ENCODE measurements at regions of chr1 and their contacts with region 1.

Region 1: GRCh38 chr1:36385410-36386257 is at the start of gene STK40:
- DNase-seq: peak; percentile 99
- H3K4me3 Mint-ChIP-seq: peak within 1 kb of the TSS; percentile 93
- H3K27ac Mint-ChIP-seq: peak within 1 kb of the TSS; percentile 100
- H3K4me1 Mint-ChIP-seq: peaks cover 56% of the 10 kb centered on the region
- H3K27me3 Mint-ChIP-seq: no peaks in the 10 kb centered on the region
- total RNA-seq, gene STK40: 57.3 to 57.4 TPM

Region 2: GRCh38 chr1:36051821-36052220 is 333.8 kb before region 1 on chr1:
- CTCF ChIA-PET with region 1: no interaction called
- POLR2A ChIA-PET with region 1: no interaction called
- intact Hi-C with region 1: no loop called
- DNase-seq: no peak
- H3K4me3 Mint-ChIP-seq: no peak overlapping the region
- H3K27ac Mint-ChIP-seq: no peak overlapping the region
- H3K4me1 Mint-ChIP-seq: no peaks in the 10 kb centered on the region
- H3K27me3 Mint-ChIP-seq: no peaks in the 10 kb centered on the region

Region 3: DNA sequence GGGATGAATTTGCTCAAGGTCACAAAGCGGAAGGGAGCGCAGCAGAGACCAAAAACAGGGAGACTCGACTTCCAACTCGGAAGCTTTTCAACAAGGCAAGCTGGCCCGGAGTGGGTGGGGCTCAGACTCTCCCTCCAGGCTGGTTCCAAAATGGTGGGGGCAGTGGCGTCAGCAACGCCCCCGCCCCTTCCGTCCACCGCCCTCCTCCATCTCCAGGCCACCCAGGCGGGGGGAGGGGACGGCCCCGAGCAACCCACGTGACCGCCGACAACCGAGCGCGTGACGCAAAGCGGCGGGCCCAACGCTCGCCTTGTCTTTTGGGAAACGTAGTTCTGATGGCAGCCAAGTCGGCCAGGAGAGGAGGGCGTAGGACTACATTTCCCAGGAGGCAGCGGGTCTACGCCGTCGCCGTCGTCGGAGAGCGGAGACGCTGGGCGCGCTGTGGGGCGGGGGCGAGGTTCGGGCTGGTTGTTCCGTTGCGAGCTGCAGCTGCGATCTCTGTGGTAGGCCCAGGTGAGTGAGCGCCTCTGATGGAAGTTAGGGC is 161.6 kb before region 1 on chr1 and contains the start of gene THRAP3:
- CTCF ChIA-PET with region 1: no interaction called
- POLR2A ChIA-PET with region 1: no interaction called
- intact Hi-C with region 1: loop called (anchors 1 kb)
- DNase-seq: peak; percentile 100
- H3K4me3 Mint-ChIP-seq: peak within 1 kb of the TSS; percentile 99
- H3K27ac Mint-ChIP-seq: peak within 1 kb of the TSS; percentile 100
- H3K4me1 Mint-ChIP-seq: peaks cover 30% of the 10 kb centered on the region
- H3K27me3 Mint-ChIP-seq: no peaks in the 10 kb centered on the region
- total RNA-seq, gene THRAP3: 135 to 138 TPM

Region 4: GRCh38 chr1:36306902-36307456 is 78.7 kb before region 1 on chr1:
- CTCF ChIA-PET with region 1: no interaction called
- POLR2A ChIA-PET with region 1: interaction called, 11 read pairs
- intact Hi-C with region 1: loop called (anchors 1 kb)
- DNase-seq: peak; percentile 95
- H3K4me3 Mint-ChIP-seq: peak overlapping the region; percentile 95
- H3K27ac Mint-ChIP-seq: peak overlapping the region; percentile 79
- H3K4me1 Mint-ChIP-seq: peaks cover 43% of the 10 kb centered on the region
- H3K27me3 Mint-ChIP-seq: no peaks in the 10 kb centered on the region

Region 5: GRCh38 chr1:36369061-36369861 is 16.4 kb before region 1 on chr1:
- CTCF ChIA-PET with region 1: interaction called, 66 read pairs
- POLR2A ChIA-PET with region 1: interaction called, 11 read pairs
- intact Hi-C with region 1: no loop called
- DNase-seq: peak; percentile 90
- H3K4me3 Mint-ChIP-seq: no peak overlapping the region
- H3K27ac Mint-ChIP-seq: peak overlapping the region; percentile 62
- H3K4me1 Mint-ChIP-seq: peaks cover 67% of the 10 kb centered on the region
- H3K27me3 Mint-ChIP-seq: no peaks in the 10 kb centered on the region

Region 6: GRCh38 chr1:36411674-36412520 is 26.3 kb after region 1 on chr1:
- CTCF ChIA-PET with region 1: no interaction called
- POLR2A ChIA-PET with region 1: interaction called, 4 read pairs
- intact Hi-C with region 1: loop called (anchors 1 kb)
- DNase-seq: peak; percentile 81
- H3K4me3 Mint-ChIP-seq: peak overlapping the region; percentile 38
- H3K27ac Mint-ChIP-seq: peak overlapping the region; percentile 65
- H3K4me1 Mint-ChIP-seq: peaks cover 16% of the 10 kb centered on the region
- H3K27me3 Mint-ChIP-seq: no peaks in the 10 kb centered on the region

Region 7: GRCh38 chr1:36458654-36459309 is 73.1 kb after region 1 on chr1:
- CTCF ChIA-PET with region 1: no interaction called
- POLR2A ChIA-PET with region 1: interaction called, 4 read pairs
- intact Hi-C with region 1: loop called (anchors 2 kb)
- DNase-seq: peak; percentile 85
- H3K4me3 Mint-ChIP-seq: no peak overlapping the region
- H3K27ac Mint-ChIP-seq: peak overlapping the region; percentile 77
- H3K4me1 Mint-ChIP-seq: peaks cover 44% of the 10 kb centered on the region
- H3K27me3 Mint-ChIP-seq: no peaks in the 10 kb centered on the region

Region 8: GRCh38 chr1:36486436-36487335 is 101.1 kb after region 1 on chr1:
- CTCF ChIA-PET with region 1: no interaction called
- POLR2A ChIA-PET with region 1: no interaction called
- intact Hi-C with region 1: no loop called
- DNase-seq: no peak
- H3K4me3 Mint-ChIP-seq: no peak overlapping the region
- H3K27ac Mint-ChIP-seq: no peak overlapping the region
- H3K4me1 Mint-ChIP-seq: peaks cover 10% of the 10 kb centered on the region
- H3K27me3 Mint-ChIP-seq: no peaks in the 10 kb centered on the region

Measured in activated CD4-positive, alpha-beta memory T cell treated with anti-CD3 and anti-CD28 coated beads for 36 hours (primary cell).